AG04450 (cell line): ENCODE measurements at regions of chr16 and their contacts with region 1.

Region 1: GRCh38 chr16:2386990-2387389 is 42.3 kb upstream of the CCNF start:
- DNase-seq: no peak
- H3K4me3 ChIP-seq: no peak overlapping the region
- H3K27ac ChIP-seq: no peak overlapping the region
- H3K27me3 ChIP-seq: peaks cover 4% of the 10 kb centered on the region
- CTCF ChIP-seq: peak; percentile 29

Region 2: DNA sequence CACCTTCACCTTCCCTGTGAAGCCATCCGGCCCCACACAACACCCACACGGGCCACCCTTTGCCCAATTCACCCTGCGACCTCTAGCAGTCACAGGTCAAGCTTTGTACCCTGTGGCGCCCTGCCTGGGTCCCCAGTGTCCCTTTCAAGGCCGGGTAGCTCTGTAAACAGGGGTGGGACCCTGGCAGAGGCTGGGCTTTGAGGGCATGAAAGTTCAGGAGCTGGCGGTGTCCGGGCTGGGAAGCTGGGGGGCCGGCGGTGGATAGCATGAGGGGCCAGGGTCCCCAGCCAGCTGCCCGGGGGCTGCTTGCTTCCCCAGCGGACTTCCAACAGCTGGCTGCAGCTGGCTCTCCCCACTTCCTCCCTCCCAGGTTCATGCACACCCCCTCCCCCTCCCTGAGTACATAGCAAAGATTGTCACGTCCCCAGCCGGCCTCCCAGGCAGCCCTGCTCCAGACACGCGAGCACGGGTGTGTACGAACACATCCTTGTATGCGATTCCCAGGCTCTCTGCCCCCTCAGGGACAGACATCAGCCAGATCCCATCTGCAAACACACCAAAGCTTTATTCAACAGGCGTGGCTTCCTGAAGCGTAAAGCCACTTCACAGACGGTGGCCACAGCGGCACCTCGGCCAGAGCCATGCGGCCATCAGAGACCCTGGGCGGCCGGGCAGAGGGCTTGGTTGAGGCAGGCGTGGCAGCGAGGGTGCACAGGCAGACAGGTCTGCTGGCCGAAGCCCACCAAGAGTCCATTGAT is 347.5 kb before region 1 on chr16:
- CTCF ChIA-PET with region 1: no interaction called
- POLR2A ChIA-PET with region 1: interaction called, 12 read pairs
- DNase-seq: peak; percentile 81
- H3K4me3 ChIP-seq: no peak overlapping the region
- H3K27ac ChIP-seq: peak overlapping the region; percentile 91
- H3K27me3 ChIP-seq: no peaks in the 10 kb centered on the region
- CTCF ChIP-seq: no peak

Region 3: DNA sequence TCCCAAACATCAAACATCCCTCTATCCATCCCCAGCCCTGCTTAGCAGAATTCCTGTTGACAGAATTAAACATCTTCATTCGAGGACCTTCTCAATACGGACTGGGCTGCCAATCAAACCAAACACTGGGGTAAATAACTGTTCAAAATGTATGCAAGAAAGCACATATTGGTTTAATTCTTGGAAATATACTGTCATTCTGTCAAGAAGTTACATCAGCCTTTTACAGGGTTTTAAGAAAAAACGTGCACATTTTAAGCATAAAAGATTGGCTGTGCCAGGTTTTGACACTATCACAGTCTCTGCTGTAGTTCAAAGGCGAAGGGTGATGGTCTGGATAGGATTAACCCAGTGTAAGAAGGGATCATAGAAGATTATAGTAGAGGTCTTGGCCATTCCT is 17.1 kb after region 1 on chr16:
- CTCF ChIA-PET with region 1: no interaction called
- POLR2A ChIA-PET with region 1: no interaction called
- DNase-seq: no peak
- H3K4me3 ChIP-seq: no peak overlapping the region
- H3K27ac ChIP-seq: no peak overlapping the region
- H3K27me3 ChIP-seq: peaks cover 2% of the 10 kb centered on the region
- CTCF ChIP-seq: no peak